T-cell (primary cell): ENCODE measurements at regions of chr10 and their contacts with region 1.

Region 1: DNA sequence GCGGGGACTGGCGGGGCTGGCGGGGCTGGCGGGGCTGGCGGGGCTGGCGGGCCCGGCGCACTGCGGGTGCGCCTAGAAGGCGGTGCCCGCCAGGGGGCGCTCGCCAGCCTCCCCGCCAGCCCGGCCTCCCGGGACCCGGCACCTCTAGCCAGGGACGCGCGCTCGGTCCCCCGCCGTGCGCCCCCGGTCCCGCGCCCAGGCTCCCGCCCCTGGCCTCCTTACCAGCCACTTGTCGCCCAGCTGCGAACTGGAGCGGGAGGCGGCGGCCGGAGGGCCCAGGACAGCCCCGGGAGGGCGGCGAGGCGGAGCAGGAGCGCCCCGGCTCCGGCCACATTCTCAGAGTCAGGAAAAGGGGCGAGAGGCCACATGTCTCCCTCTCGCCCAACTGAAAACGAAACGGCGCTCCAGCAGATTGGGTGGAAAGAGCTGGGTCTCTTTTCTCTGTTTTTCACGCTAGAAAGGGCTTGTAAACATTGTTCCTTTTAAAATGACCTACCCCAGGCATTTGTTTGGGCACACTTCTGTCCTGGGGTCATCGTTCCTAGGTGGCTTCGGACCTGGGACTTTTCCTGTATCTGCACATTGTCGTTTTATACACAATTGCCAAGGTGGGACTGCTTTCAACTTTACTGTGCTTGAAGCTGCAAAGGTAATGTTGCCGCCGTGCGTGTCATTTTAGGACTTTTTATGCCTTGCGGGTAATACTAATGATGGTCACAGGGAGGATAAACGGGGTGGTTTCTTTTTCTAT is 378 bp upstream of the PRKCQ start:
- DNase-seq: peak; percentile 52 to 91 (median 79)
- ATAC-seq: peak; percentile 72 to 79 (median 74)
- H3K4me3 ChIP-seq: peak overlapping the region; percentile 66 to 92
- H3K4me3 Mint-ChIP-seq: peak overlapping the region; percentile 91 to 95 (median 94)
- H3K27ac ChIP-seq: peak overlapping the region; percentile 70
- H3K27ac Mint-ChIP-seq: peak overlapping the region; percentile 98 to 100
- H3K4me1 ChIP-seq: peaks cover 36 to 56% of the 10 kb centered on the region in 2 experiments
- H3K4me1 Mint-ChIP-seq: peaks cover 59 to 83% (median 61%) of the 10 kb centered on the region in 3 donors
- H3K27me3 ChIP-seq: no peaks in the 10 kb centered on the region
- H3K27me3 Mint-ChIP-seq: no peaks in the 10 kb centered on the region

Region 2: DNA sequence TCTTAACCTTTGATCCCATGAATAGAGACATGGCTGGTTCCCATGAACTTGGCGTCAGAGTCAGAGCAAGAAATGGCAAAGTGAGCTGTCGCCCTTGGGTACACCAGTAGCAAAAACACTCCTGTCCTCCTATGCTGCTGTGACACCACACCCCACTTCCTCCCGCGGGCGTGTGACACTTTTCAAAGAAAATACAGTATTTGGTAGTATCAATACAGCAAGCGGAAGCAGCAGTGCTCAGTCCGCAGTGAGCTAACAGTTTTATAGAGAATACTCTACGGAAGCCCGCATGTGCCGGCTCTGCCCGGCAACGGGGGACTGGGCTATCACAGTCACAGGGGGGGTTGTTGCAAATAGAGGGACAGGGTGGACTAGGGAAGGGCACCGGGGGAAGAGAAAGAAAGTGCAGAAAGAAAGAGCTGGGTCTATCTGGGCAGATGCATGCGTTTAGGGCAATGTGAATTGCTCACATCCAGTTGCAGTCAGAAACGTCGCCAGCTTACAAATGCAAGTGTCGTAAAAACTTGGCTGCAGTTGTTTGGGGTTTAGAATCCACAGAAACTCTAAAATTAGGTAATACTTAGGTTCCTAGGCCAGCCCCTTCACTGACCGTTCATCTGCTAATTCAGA is 50.1 kb before region 1 on chr10:
- CTCF ChIA-PET with region 1: interaction called, 3 to 12 read pairs
- POLR2A ChIA-PET with region 1: interaction called, 3 to 8 read pairs
- DNase-seq: peak; percentile 62 to 90 (median 81)
- ATAC-seq: peak; percentile 96 to 98 (median 97)
- H3K4me3 ChIP-seq: peak overlapping the region; percentile 31 to 42
- H3K4me3 Mint-ChIP-seq: peak overlapping the region; percentile 83 to 90 (median 83)
- H3K27ac ChIP-seq: peak overlapping the region; percentile 86
- H3K27ac Mint-ChIP-seq: peak overlapping the region; percentile 99 to 100
- H3K4me1 ChIP-seq: peaks cover 38 to 68% of the 10 kb centered on the region in 2 experiments
- H3K4me1 Mint-ChIP-seq: peaks cover 91 to 93% (median 93%) of the 10 kb centered on the region in 3 donors
- H3K27me3 ChIP-seq: no peaks in the 10 kb centered on the region
- H3K27me3 Mint-ChIP-seq: no peaks in the 10 kb centered on the region

Region 3: GRCh38 chr10:6563075-6563474 is 17.4 kb before region 1 on chr10:
- CTCF ChIA-PET with region 1: interaction called, 4 to 14 read pairs
- POLR2A ChIA-PET with region 1: no interaction called
- DNase-seq: peak in 10 of 35 experiments; percentile 8 to 59 (median 28)
- ATAC-seq: peak; percentile 48 to 69 (median 51)
- H3K4me3 ChIP-seq: no peak overlapping the region
- H3K4me3 Mint-ChIP-seq: peak overlapping the region; percentile 55 to 71 (median 65)
- H3K27ac ChIP-seq: peak overlapping the region; percentile 37
- H3K27ac Mint-ChIP-seq: peak overlapping the region; percentile 87 to 88
- H3K4me1 ChIP-seq: peaks cover 41 to 74% of the 10 kb centered on the region in 2 experiments
- H3K4me1 Mint-ChIP-seq: peaks cover 94% of the 10 kb centered on the region in 3 donors
- H3K27me3 ChIP-seq: no peaks in the 10 kb centered on the region
- H3K27me3 Mint-ChIP-seq: no peaks in the 10 kb centered on the region

Region 4: DNA sequence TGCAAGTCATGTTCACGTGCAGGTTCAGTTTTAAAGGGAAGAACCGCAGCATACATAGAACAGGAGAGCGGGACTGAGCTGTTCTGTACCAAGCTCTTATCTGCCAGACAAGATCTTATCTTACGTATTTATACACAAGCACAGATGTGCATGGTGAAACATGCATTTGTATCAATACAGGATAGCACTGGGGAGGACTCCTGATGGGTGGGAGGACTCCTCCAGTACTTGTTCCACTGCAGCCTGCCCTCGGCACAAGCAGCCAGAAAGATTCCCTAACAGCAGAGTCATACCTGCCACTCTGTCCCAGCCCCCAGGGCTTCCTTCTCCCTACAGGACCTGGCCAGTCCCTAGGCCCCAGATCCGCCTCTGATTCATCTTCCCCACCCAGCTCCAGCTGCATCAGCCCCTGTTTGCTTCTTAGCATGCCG is 12.8 kb after region 1 on chr10:
- CTCF ChIA-PET with region 1: interaction called, 4 to 12 read pairs
- POLR2A ChIA-PET with region 1: interaction called, 4 to 11 read pairs
- DNase-seq: peak in 4 of 35 experiments; percentile 19 to 60 (median 45)
- ATAC-seq: peak; percentile 30 to 73 (median 62)
- H3K4me3 ChIP-seq: no peak overlapping the region
- H3K4me3 Mint-ChIP-seq: peak overlapping the region; percentile 64 to 91 (median 68)
- H3K27ac ChIP-seq: peak overlapping the region; percentile 85
- H3K27ac Mint-ChIP-seq: peak overlapping the region; percentile 97 to 98
- H3K4me1 ChIP-seq: peaks cover 54 to 95% of the 10 kb centered on the region in 2 experiments
- H3K4me1 Mint-ChIP-seq: peaks cover 95% of the 10 kb centered on the region in 3 donors
- H3K27me3 ChIP-seq: no peaks in the 10 kb centered on the region
- H3K27me3 Mint-ChIP-seq: no peaks in the 10 kb centered on the region

Region 5: DNA sequence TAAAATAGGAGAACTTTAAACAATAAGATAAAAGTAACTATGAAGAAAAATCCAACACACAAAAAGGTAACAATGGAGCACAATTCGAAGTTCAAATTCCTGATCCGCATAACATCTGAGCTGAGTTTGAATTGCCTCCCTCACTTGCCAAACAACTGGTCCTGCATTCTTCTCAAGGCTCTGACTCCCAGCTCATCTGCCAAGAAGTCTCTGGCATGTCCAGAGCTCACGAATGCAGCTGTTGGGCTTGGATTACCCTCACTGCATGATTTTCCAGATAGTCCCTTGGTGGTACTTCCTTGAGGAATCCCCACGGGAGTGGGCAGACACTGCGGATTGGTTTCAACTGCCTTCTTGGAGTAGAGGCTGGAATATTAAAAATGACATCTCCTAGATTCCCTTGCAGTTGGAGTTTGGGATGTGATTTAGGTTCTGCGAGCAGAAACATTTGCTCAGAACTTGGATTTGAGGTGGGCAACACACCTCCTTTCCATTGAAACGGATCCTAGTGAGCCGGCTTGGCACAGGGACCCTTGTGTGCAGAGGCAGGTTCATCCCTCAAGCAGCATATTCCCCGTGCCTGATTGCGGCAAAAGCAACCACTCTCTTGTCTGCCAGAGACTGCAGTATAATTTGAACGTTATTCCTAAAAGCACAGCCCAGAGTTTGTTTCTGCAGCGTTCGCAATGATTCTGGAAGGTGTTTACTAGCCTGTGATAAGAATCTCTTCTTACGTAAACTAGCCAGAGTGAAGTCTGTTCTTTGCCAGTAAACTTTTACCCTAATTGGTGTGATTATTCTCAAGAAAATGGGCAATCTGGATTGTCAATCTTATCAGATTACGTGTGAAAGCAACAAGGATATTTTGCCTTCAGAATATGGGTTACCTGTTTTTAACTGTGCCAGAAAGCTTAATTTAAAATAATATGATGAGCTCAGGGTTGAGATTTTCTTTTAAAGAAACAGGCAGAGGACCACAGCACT is 23.0 kb after region 1 on chr10:
- CTCF ChIA-PET with region 1: interaction called, 8 to 28 read pairs
- POLR2A ChIA-PET with region 1: interaction called, 3 read pairs
- DNase-seq: no peak
- ATAC-seq: no peak
- H3K4me3 ChIP-seq: no peak overlapping the region
- H3K4me3 Mint-ChIP-seq: no peak overlapping the region
- H3K27ac ChIP-seq: no peak overlapping the region
- H3K27ac Mint-ChIP-seq: peak overlapping the region; percentile 18 to 44
- H3K4me1 ChIP-seq: peaks cover 43 to 46% of the 10 kb centered on the region in 2 experiments
- H3K4me1 Mint-ChIP-seq: peaks cover 50 to 85% (median 61%) of the 10 kb centered on the region in 3 donors
- H3K27me3 ChIP-seq: no peaks in the 10 kb centered on the region
- H3K27me3 Mint-ChIP-seq: no peaks in the 10 kb centered on the region

Region 6: GRCh38 chr10:6647811-6648526 is 67.5 kb after region 1 on chr10:
- CTCF ChIA-PET with region 1: interaction called, 3 to 17 read pairs
- POLR2A ChIA-PET with region 1: interaction called, 3 to 9 read pairs
- DNase-seq: peak in 34 of 35 experiments; percentile 26 to 84 (median 54)
- ATAC-seq: peak; percentile 87 to 96 (median 90)
- H3K4me3 ChIP-seq: no peak overlapping the region
- H3K4me3 Mint-ChIP-seq: no peak overlapping the region
- H3K27ac ChIP-seq: no peak overlapping the region
- H3K27ac Mint-ChIP-seq: no peak overlapping the region
- H3K4me1 ChIP-seq: peaks cover 10 to 11% of the 10 kb centered on the region in 2 experiments
- H3K4me1 Mint-ChIP-seq: peaks cover 17 to 29% (median 19%) of the 10 kb centered on the region in 3 donors
- H3K27me3 ChIP-seq: no peaks in the 10 kb centered on the region
- H3K27me3 Mint-ChIP-seq: peaks cover 0 to 2% of the 10 kb centered on the region in 2 donors

Region 7: GRCh38 chr10:6674291-6674690 is 93.8 kb after region 1 on chr10:
- CTCF ChIA-PET with region 1: no interaction called
- POLR2A ChIA-PET with region 1: no interaction called
- DNase-seq: no peak
- ATAC-seq: no peak
- H3K4me3 ChIP-seq: no peak overlapping the region
- H3K4me3 Mint-ChIP-seq: no peak overlapping the region
- H3K27ac ChIP-seq: no peak overlapping the region
- H3K27ac Mint-ChIP-seq: no peak overlapping the region
- H3K4me1 ChIP-seq: no peaks in the 10 kb centered on the region
- H3K4me1 Mint-ChIP-seq: peaks cover 0 to 6% (median 4%) of the 10 kb centered on the region in 3 donors
- H3K27me3 ChIP-seq: no peaks in the 10 kb centered on the region
- H3K27me3 Mint-ChIP-seq: peaks cover 0 to 7% of the 10 kb centered on the region in 2 donors

Region 8: DNA sequence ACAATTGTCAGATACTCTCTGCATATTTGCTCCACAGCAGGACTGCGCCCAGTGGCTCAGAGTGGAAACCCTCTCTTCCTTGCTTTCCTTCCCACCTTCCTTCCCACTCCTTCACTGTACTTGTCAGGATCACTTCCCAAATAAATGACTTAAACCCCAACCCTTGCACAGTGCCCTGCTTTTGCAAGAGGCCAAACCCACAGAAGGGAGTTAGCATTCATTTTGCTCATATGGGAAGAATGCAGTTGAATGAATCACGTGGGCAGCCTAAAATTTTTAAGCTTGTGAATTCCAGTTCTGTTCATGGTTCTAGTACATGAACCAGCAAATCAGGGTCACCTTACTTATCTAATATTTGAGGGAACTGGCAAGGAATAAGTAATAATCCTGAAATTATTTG is 878.1 kb after region 1 on chr10:
- CTCF ChIA-PET with region 1: no interaction called
- POLR2A ChIA-PET with region 1: interaction called in 1 of 2 experiments, 27 read pairs
- DNase-seq: no peak
- ATAC-seq: no peak
- H3K4me3 ChIP-seq: no peak overlapping the region
- H3K4me3 Mint-ChIP-seq: no peak overlapping the region
- H3K27ac ChIP-seq: no peak overlapping the region
- H3K27ac Mint-ChIP-seq: no peak overlapping the region
- H3K4me1 ChIP-seq: no peaks in the 10 kb centered on the region
- H3K4me1 Mint-ChIP-seq: peaks cover 0 to 2% (median 2%) of the 10 kb centered on the region in 3 donors
- H3K27me3 ChIP-seq: no peaks in the 10 kb centered on the region
- H3K27me3 Mint-ChIP-seq: no peaks in the 10 kb centered on the region